Activated CD4-positive, alpha-beta T cell treated with anti-CD3 and anti-CD28 coated beads for 36 hours (primary cell): ENCODE measurements at regions of chr17 and their contacts with region 1.

Region 1: DNA sequence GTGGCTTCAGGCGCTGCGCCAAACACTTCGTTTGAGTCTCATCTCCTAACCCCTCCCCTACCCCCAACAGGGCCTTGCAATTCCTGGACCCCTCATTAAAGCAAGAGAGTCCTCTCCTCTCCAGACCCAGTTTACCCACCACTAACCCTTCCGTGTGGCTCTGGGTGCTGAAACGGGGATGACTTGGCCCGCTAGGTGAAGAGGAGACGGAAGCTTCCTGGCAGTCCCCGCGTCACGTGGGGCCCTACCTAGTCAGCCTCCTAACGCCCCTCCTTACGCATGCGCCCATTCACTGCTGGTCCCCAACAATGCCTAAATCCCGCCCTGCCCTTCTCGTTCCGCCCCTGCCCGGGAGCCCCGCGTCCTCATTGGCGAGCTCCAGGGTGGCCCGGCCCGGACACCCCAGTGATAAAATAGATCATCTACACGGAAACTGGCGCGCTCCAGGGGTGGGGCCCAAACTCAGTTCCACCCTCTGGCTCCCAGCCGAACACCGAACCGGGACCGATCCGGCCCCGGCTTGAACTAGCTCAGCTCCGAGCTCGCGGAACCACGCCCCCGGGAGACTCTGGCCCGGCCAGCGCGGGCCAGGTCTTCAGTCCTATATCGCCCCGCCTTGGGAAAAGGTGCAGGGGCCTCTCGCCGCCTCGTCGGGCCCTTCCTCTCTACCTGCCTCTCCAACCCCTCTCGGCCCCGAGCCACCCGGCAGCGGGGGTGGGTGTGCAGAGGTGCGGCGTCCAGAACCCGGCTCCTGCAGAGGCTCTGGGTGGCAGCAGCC is at the start of gene SLC16A13:
- DNase-seq: peak; percentile 99
- ATAC-seq: peak; percentile 95
- H3K4me3 Mint-ChIP-seq: peak within 1 kb of the TSS; percentile 86
- H3K27ac Mint-ChIP-seq: peak within 1 kb of the TSS; percentile 96
- H3K4me1 Mint-ChIP-seq: peaks cover 45% of the 10 kb centered on the region
- H3K27me3 Mint-ChIP-seq: no peaks in the 10 kb centered on the region
- total RNA-seq, gene SLC16A13: 8.3 to 9.6 TPM

Region 2: DNA sequence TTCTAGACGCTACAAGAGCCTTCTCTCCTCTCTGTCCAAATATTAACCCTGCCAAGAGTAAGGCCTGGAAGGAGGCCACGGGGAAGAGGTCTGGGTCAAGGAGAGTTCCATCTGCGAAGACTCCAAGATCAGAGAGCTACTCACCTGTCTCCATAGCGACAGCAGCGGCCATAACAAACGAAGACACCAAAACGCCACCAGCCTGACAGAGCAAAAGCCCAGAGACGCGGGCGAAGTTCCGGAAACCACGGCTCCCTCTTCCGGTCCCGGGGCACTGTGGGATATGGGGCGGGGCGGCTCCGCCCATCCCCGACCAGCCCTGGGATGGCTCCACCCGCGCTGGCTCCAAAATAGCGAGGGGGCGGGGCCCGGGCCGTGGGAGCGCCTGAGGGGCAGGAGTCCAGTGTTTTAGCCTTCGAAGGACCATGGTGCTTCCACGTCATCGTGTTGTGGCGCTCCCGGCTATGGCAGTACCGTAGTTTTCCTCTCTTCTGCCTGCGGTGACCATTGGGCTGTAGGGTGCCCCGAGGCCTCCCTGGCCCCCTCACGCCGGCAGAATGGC is 384.3 kb before region 1 on chr17 and contains the starts of genes C17orf100 and MED31:
- CTCF ChIA-PET with region 1: no interaction called
- POLR2A ChIA-PET with region 1: no interaction called
- intact Hi-C with region 1: loop called in 1 of 2 experiments (anchors 1 kb)
- DNase-seq: peak; percentile 97
- ATAC-seq: peak; percentile 95
- H3K4me3 Mint-ChIP-seq: peak within 1 kb of the TSS; percentile 98
- H3K27ac Mint-ChIP-seq: peak within 1 kb of the TSS; percentile 99
- H3K4me1 Mint-ChIP-seq: peaks cover 55% of the 10 kb centered on the region
- H3K27me3 Mint-ChIP-seq: peaks cover 2% of the 10 kb centered on the region
- total RNA-seq, gene C17orf100: 1.6 to 2.0 TPM
- total RNA-seq, gene MED31: 17.7 to 24.5 TPM

Region 3: GRCh38 chr17:7021993-7022778 is 13.6 kb before region 1 on chr17:
- CTCF ChIA-PET with region 1: interaction called, 13 read pairs
- POLR2A ChIA-PET with region 1: interaction called, 5 read pairs
- intact Hi-C with region 1: loop called in 1 of 2 experiments (anchors 1 kb)
- DNase-seq: peak; percentile 89
- ATAC-seq: peak; percentile 79
- H3K4me3 Mint-ChIP-seq: peak overlapping the region; percentile 44
- H3K27ac Mint-ChIP-seq: peak overlapping the region; percentile 55
- H3K4me1 Mint-ChIP-seq: peaks cover 43% of the 10 kb centered on the region
- H3K27me3 Mint-ChIP-seq: peaks cover 12% of the 10 kb centered on the region

Region 4: DNA sequence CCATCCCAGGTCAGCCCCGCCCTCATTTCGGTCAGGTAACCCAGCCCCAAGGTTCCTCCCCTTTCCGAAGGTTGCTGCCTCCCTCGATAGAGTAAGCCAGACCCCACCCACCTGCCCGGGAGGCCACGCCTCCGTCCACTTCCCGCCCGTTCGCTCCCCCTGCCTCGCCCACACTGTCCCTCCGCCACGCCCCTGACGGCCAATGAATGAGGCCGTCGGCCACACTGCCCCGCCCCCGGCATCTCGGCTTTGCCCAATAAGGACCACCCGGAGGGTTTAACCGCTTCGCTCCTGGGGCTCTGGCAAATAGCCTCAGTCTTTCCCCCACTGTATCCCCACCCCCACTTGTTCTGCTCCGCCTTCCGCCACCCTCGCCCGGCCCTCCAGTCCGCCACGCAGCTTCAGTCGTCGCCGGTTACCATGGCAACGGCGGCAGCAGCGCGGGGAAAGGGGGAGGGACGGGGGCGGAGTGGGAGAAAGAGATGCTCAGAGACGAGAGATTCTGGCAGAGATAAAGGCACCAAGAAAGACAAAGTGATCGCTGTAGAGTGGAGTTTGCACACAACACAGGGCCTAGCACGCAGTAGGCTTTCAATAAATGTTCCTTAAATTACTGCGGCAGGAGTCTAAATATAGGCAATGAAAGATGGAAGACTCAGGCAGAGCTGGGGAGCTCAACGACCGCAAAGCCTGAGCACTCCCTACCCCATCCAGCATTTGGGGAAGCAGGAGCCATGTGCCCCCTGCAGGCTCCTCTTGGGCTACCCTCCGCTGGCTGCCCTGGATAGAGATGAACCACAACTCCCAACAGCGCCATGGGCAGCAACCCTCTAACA is 178.7 kb after region 1 on chr17:
- CTCF ChIA-PET with region 1: no interaction called
- POLR2A ChIA-PET with region 1: interaction called, 3 read pairs
- intact Hi-C with region 1: loop called in 1 of 2 experiments (anchors 1 kb)
- DNase-seq: peak; percentile 100
- ATAC-seq: peak; percentile 82
- H3K4me3 Mint-ChIP-seq: peak overlapping the region; percentile 81
- H3K27ac Mint-ChIP-seq: peak overlapping the region; percentile 93
- H3K4me1 Mint-ChIP-seq: peaks cover 71% of the 10 kb centered on the region
- H3K27me3 Mint-ChIP-seq: peaks cover 7% of the 10 kb centered on the region

Region 5: DNA sequence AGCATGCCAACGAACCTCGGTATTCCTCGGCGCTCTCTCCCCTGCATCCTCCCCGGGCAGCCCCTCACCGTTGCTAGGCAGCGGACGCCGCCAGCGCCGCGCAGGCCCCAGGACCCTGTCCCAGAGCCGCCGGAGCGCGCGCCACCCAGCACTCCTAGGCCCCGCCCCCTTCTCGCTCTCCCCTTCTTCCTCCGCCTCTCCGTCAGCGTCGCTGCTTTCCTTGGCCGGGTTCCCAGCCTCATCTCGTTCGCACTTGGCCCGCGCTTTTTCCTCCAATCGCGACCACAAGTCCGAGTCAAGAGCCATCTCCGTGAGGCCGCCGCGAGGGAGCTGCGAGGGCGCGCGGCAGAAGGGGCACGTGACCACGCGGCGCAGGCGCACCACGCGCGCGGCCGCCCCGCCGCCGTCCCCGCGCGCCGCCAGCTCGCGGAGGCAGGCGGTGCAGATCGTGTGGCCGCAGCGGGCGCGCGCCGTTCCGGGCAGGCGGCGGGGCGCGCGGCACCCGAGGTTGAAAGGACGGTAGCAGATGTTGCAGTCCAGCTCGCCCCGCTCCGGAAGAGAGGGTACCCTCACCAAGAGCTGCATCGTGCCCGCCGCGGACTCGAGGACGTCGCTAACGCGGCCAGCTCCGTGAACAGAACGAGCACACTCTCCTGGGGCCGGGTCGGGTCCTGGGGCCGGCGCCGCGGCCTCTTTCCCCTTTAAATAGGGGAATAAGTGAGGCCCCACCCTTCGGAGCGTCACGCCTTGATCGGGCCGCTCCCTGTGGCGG is 880.0 kb after region 1 on chr17 and contains the start of gene RNF227:
- CTCF ChIA-PET with region 1: no interaction called
- POLR2A ChIA-PET with region 1: no interaction called
- intact Hi-C with region 1: no loop called
- DNase-seq: peak; percentile 95
- ATAC-seq: peak; percentile 88
- H3K4me3 Mint-ChIP-seq: peak within 1 kb of the TSS; percentile 86
- H3K27ac Mint-ChIP-seq: peak within 1 kb of the TSS; percentile 82
- H3K4me1 Mint-ChIP-seq: peaks cover 27% of the 10 kb centered on the region
- H3K27me3 Mint-ChIP-seq: no peaks in the 10 kb centered on the region
- total RNA-seq, gene RNF227: 3.8 to 5.6 TPM